Activated CD4-positive, alpha-beta T cell treated with anti-CD3 and anti-CD28 coated beads for 36 hours (primary cell): ENCODE measurements at regions of chr1 and their contacts with region 1.

Region 1: GRCh38 chr1:161792740-161793139 is 26.6 kb downstream of the ATF6 start:
- DNase-seq: no peak
- ATAC-seq: peak; percentile 96
- H3K4me3 Mint-ChIP-seq: no peak overlapping the region
- H3K27ac Mint-ChIP-seq: no peak overlapping the region
- H3K4me1 Mint-ChIP-seq: peaks cover 30% of the 10 kb centered on the region
- H3K27me3 Mint-ChIP-seq: no peaks in the 10 kb centered on the region

Region 2: GRCh38 chr1:161781995-161782394 is 10.7 kb before region 1 on chr1:
- CTCF ChIA-PET with region 1: interaction called, 13 read pairs
- POLR2A ChIA-PET with region 1: no interaction called
- intact Hi-C with region 1: no loop called
- DNase-seq: no peak
- ATAC-seq: no peak
- H3K4me3 Mint-ChIP-seq: no peak overlapping the region
- H3K27ac Mint-ChIP-seq: no peak overlapping the region
- H3K4me1 Mint-ChIP-seq: peaks cover 13% of the 10 kb centered on the region
- H3K27me3 Mint-ChIP-seq: no peaks in the 10 kb centered on the region

Region 3: GRCh38 chr1:161905269-161905884 is 112.6 kb after region 1 on chr1:
- CTCF ChIA-PET with region 1: interaction called, 7 read pairs
- POLR2A ChIA-PET with region 1: no interaction called
- intact Hi-C with region 1: loop called (anchors 5 to 10 kb)
- DNase-seq: peak; percentile 56
- ATAC-seq: peak; percentile 70
- H3K4me3 Mint-ChIP-seq: no peak overlapping the region
- H3K27ac Mint-ChIP-seq: no peak overlapping the region
- H3K4me1 Mint-ChIP-seq: peaks cover 28% of the 10 kb centered on the region
- H3K27me3 Mint-ChIP-seq: no peaks in the 10 kb centered on the region

Region 4: DNA sequence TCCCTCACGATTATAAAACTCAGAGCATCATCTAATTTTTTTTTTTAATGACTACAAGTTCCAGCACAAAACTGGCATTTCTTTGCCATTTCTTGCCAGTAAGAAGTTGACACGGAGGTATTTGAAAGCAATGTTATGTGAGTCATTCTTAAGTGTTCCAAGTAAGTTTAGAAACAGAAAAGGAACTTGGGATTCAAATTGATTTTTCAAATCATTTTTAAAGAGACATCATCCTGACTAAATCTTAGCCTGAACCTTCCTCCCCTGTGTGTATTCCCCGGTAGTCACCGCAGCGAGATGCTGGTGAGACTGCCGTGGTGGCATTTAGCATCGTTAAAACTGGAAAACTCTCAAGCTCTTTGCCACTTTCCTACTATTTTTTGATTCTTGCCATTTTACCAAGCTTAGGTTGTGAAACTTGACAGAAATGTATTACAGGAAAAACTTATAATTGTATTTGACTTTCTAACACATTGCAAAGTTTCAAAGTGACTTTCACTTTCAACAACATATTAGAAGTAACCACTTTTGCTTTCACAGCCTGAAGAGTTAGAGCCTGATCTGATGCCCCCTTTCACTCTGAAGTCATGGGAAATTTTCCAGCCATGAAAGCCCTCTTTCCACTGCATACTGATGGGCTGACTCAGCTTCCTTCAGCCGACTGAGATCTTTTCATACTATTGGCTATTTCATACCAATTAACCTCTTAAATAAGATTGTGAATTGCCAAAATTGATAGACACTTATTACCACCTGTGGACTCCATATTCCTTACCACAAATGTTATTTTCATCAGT is 169.5 kb after region 1 on chr1:
- CTCF ChIA-PET with region 1: no interaction called
- POLR2A ChIA-PET with region 1: no interaction called
- intact Hi-C with region 1: loop called (anchors 2 kb)
- DNase-seq: peak; percentile 69
- ATAC-seq: peak; percentile 96
- H3K4me3 Mint-ChIP-seq: peak overlapping the region; percentile 57
- H3K27ac Mint-ChIP-seq: peak overlapping the region; percentile 95
- H3K4me1 Mint-ChIP-seq: peaks cover 59% of the 10 kb centered on the region
- H3K27me3 Mint-ChIP-seq: no peaks in the 10 kb centered on the region

Region 5: GRCh38 chr1:162035241-162035640 is 242.5 kb after region 1 on chr1:
- CTCF ChIA-PET with region 1: interaction called, 105 read pairs
- POLR2A ChIA-PET with region 1: interaction called, 7 read pairs
- intact Hi-C with region 1: loop called (anchors 1 kb)
- DNase-seq: peak; percentile 45
- ATAC-seq: peak; percentile 21
- H3K4me3 Mint-ChIP-seq: no peak overlapping the region
- H3K27ac Mint-ChIP-seq: no peak overlapping the region
- H3K4me1 Mint-ChIP-seq: peaks cover 7% of the 10 kb centered on the region
- H3K27me3 Mint-ChIP-seq: peaks cover 4% of the 10 kb centered on the region

Region 6: DNA sequence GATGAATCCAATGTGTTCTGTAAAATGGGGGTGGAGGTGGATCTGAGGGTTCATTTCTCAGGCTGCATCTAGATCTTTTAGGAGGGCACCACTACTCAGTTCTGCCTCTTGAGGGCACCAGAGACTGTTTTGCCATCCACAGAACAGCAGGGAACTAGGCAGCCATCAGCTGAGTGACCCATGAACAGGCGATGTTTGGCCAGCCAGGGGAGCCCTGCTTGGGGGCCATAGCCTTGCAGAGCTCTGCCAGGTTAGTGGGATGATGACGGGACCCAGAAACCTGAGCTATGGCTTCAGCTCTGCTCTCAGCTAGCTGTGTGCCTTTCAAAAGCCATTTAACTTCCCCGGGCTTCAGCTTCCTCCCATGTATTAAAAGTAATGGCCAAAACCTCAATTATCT is 263.3 kb after region 1 on chr1:
- CTCF ChIA-PET with region 1: interaction called, 10 read pairs
- POLR2A ChIA-PET with region 1: no interaction called
- intact Hi-C with region 1: no loop called
- DNase-seq: peak; percentile 68
- ATAC-seq: peak; percentile 84
- H3K4me3 Mint-ChIP-seq: no peak overlapping the region
- H3K27ac Mint-ChIP-seq: no peak overlapping the region
- H3K4me1 Mint-ChIP-seq: no peaks in the 10 kb centered on the region
- H3K27me3 Mint-ChIP-seq: peaks cover 2% of the 10 kb centered on the region

Region 7: DNA sequence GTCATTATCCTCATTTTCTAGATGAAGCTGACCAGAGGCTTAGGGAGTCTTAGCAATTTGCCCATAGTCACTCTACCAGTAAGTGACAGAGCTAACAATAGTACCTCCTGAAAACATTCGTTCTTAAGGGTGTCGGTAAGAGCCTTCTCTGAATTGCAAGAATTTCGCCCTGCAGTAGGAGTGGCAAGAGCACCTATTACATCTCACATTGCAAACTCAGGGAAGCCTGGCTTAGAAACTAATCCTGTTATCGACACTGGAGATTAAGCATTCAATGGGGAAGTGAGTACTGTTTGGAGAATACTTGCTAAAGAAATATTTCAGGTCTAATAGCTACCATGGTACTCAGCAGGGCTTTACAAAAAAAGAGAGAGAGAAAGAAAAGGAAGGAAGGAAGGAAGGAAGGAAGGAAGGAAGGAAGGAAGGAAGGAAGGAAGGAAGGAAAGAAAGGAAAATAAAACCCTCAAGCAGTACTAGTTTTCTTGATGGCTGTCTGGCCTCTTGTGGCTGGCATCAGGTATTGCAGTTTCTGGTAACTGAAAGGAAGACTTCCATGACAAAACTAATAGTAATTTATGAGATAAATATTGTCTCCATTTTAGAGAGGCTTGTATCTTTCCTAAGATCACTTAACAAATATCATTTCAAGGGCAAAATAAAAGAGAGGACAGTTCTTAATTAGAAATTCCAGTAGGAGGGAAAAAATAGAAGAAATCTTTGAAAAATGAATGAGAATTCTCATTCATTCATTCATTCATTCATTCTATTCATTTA is 599.2 kb after region 1 on chr1:
- CTCF ChIA-PET with region 1: no interaction called
- POLR2A ChIA-PET with region 1: no interaction called
- intact Hi-C with region 1: loop called in 1 of 2 experiments (anchors 5 kb)
- DNase-seq: peak; percentile 35
- ATAC-seq: no peak
- H3K4me3 Mint-ChIP-seq: no peak overlapping the region
- H3K27ac Mint-ChIP-seq: no peak overlapping the region
- H3K4me1 Mint-ChIP-seq: no peaks in the 10 kb centered on the region
- H3K27me3 Mint-ChIP-seq: peaks cover 26% of the 10 kb centered on the region